ENCODE measurements at regions of chr19 and their contacts with region 1.

Region 1: DNA sequence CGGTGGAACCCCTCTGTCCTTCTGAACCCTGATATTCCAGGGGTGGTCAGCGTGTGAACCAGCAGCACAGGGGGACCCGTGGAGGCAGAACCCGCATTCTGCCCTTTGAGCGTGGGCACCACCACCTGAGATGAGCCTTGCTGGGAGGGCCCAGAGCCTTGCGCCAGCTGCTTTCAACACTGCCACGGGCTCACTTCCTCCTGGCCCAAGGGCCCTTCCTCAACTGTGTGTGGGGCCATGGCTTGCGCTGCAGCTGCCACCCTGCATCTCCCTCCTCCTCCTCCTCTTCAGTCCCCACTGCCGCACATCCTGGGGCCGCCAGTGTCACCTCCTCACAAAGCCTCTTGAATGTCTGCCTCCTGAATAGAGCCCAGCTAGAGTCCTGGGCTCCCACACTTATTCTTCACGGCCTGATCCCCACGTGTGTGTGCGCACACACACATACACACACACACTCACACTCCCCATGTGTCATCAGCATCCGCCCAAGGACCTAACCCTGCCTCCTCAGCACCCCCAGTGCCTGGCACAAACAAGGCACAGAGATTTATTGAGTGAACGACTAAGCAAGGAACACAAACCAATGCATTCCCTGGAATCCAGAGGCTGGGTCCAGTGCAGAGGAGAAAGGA is 26.9 kb upstream of the TMEM160 start:
- DNase-seq: no peak
- H3K4me3 ChIP-seq: no peak overlapping the region
- H3K27ac ChIP-seq: no peak overlapping the region
- H3K27me3 ChIP-seq: no peaks in the 10 kb centered on the region
- CTCF ChIP-seq: no peak

Region 2: GRCh38 chr19:45467456-45468158 is 1607.7 kb before region 1 on chr19 and contains the start of gene FOSB:
- CTCF ChIA-PET with region 1: no interaction called
- POLR2A ChIA-PET with region 1: no interaction called
- DNase-seq: peak; percentile 87
- H3K4me3 ChIP-seq: peak within 1 kb of the TSS; percentile 96
- H3K27ac ChIP-seq: peak within 1 kb of the TSS; percentile 92
- H3K27me3 ChIP-seq: no peaks in the 10 kb centered on the region
- CTCF ChIP-seq: peak; percentile 23
- polyA plus RNA-seq, gene FOSB: 1.3 and 1.7 TPM in 2 replicates

Region 3: DNA sequence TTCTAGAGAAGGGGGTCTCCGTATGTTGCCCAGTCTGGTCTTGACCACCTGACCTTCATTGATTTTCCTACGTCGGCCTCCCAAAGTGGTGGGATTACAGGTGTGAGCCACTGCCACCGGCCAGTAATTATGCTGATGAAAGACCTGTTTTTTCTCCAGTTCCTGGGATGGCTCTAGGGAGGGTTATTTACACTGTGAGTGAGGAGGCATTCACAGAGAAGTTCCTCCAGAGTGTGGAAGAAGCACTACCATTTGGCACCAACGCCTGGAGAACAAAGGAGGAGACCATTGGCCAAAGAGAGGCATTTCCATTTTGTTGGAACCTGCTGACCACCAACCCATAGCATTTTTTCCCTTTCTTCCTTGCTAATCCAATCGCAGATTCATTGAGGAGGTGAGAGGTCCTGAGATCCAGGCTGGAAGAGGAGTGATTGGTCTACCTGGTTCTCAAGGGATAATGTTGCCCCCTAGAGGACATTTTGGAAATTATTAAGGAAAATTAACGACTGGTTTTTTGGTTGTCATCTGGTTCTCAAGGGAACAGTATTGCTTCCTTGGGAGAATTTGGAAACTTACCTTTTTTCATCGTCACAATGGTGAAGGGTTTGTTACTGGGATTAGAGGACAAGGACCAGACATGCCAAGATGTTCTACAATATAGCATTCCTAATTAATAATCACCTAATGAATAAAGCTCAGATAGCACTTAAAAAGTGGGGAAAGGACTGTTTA is 49.8 kb after region 1 on chr19:
- CTCF ChIA-PET with region 1: interaction called, 13 read pairs
- POLR2A ChIA-PET with region 1: no interaction called
- DNase-seq: no peak
- H3K4me3 ChIP-seq: no peak overlapping the region
- H3K27ac ChIP-seq: no peak overlapping the region
- H3K27me3 ChIP-seq: no peaks in the 10 kb centered on the region
- CTCF ChIP-seq: peak; percentile 76